ENCODE measurements at regions of chr17 and their contacts with region 1.

Region 1: DNA sequence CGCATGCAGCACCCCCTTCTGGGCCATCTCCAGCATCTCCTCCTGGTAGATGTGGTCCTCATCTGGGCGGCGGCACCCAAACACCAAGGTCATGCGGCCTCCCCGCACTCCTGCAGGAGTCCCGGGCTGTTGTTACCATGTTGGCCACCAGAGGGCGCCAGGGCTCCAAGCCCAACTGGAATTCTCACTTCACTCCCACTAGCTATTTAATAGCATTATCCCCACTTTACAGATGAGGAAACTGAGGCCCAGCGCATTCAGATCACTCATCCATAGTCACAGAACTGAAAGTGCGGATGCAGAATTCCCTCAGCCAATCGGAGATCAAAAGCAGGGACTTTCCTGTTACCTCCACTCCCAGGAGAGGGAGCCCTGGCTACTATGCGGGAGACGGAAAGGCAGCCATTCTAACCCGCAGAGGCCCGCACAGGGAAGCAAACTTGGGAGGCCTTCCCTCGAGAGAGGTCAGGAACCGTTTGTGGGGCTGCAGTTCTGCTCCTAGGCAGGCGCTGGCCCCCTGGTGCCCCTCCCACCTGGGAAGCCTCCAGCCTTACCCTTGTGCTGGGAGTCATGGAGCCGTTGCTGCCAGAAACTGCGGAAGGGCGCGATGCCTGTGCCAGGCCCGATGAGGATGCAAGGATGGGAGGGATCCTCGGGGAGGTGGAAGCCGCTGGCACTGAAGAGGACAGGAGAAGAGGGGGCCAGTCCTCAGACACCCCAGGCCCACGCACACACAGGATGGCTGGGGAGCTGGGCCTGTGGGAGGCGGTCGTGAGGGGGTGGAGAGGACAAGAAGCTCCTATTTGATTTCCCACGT is 40.1 kb downstream of the NOS2 start:
- DNase-seq: no peak
- H3K4me3 ChIP-seq: no peak overlapping the region
- H3K27me3 ChIP-seq: no peaks in the 10 kb centered on the region; the same call in 1 of the 2 replicates
- CTCF ChIP-seq: peak; percentile 82

Region 2: GRCh38 chr17:27741361-27741861 is 18.9 kb before region 1 on chr17:
- CTCF ChIA-PET with region 1: interaction called, 10 read pairs
- POLR2A ChIA-PET with region 1: no interaction called
- DNase-seq: no peak
- H3K4me3 ChIP-seq: no peak overlapping the region
- H3K27me3 ChIP-seq: peaks cover 2% of the 10 kb centered on the region; the same call in 1 of the 2 replicates
- CTCF ChIP-seq: no peak

Region 3: DNA sequence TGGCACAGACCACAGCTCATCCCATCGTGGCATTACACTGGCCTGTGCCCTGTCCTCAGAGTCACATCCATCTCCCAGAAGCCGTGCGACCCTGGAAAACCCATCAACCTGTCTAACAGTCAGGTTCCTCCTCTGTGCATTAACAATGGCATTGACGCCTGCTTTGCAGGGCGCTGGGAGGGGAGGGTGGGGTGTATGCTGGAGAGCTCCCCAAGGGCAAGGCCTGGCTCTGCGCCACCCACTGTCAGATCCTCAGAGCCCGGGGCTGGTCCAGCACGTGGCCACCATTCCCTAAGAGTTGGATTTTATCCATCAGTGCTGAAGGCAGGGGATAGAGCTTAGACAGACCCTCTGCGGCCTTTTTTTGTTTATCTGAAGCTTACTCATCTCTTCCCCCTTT is 11.3 kb after region 1 on chr17:
- CTCF ChIA-PET with region 1: interaction called, 24 read pairs
- POLR2A ChIA-PET with region 1: no interaction called
- DNase-seq: no peak
- H3K4me3 ChIP-seq: no peak overlapping the region
- H3K27me3 ChIP-seq: peaks cover 3% of the 10 kb centered on the region; the same call in 1 of the 2 replicates
- CTCF ChIP-seq: no peak

Region 4: GRCh38 chr17:27860971-27861664 is 100.8 kb after region 1 on chr17:
- CTCF ChIA-PET with region 1: no interaction called
- POLR2A ChIA-PET with region 1: no interaction called
- DNase-seq: no peak
- H3K4me3 ChIP-seq: no peak overlapping the region
- H3K27me3 ChIP-seq: peaks cover 5% of the 10 kb centered on the region; the same call in 1 of the 2 replicates
- CTCF ChIP-seq: no peak

Region 5: DNA sequence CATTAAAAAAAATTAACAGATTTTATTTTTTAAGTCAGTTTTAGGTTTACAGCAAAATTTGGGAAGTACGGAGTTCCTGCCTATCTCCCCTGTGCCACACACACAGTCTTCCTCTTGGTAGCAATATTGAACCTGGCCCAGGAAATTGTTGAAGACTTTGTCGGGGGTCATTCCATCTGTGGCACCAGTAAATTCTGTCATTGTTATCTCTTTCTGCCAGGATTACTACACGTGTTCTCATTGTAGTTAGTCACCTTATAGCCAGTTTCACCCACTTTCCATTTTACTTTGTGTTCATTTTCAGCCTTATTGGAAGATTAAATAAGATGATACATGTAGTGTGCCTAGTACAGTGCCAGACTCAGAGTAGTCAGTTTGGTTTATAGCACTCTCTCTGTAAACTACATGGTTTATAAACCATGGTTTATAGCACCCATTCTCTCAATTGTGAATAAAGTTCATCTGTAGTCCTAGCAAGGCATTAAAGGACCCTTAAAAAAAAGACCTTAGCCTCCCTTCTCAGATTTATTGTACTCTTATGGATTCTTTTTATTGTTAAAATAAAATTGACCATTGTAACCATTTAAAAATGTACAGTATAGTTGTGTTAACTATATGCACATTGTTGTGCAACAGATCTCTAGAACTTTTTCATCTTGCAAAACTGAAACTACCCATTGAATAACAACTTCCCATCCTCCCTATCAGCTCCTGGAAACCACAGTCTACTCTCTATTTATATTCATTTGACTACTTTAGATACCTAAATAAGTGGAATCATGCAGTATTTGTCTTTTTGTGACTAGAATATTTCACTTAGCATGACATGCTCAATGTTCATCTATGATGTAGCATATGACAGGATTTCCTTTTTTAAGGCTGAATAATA is 318.3 kb after region 1 on chr17:
- CTCF ChIA-PET with region 1: no interaction called
- POLR2A ChIA-PET with region 1: no interaction called
- DNase-seq: no peak
- H3K4me3 ChIP-seq: no peak overlapping the region
- H3K27me3 ChIP-seq: no peaks in the 10 kb centered on the region
- CTCF ChIP-seq: no peak